ENCODE measurements at regions of chrX and their contacts with region 1.

Region 1: GRCh38 chrX:9829308-9830267 is 43.4 kb downstream of the SHROOM2 start:
- DNase-seq: peak; percentile 92
- H3K4me3 ChIP-seq: no peak overlapping the region
- H3K27ac ChIP-seq: peak overlapping the region; percentile 79
- H3K4me1 ChIP-seq: peaks cover 8% of the 10 kb centered on the region
- H3K27me3 ChIP-seq: no peaks in the 10 kb centered on the region
- CTCF ChIP-seq: peak in 1 of 2 donors; percentile 13

Region 2: DNA sequence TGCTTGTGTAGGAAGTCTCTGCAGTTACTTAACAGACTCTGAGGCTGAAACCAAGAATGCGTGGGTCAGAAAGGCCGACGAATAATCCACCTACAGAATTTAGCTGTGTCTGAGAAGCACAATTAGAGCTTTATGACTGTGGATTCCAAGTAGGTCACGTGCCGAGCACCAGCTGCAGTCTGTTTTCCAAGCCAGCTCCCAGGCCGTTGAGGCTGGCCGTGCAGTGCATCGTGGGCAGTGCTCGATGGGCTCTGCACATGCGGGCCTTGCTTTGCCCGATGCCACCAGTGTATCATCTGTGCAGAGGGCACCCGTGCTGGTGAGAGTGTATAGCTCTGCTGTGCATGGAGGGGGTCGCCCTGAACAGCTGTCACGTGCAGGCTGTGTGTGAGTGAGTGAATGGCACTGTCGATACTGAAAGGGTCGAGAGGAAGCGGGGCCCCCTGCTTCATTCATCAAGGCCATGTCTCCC is 70.1 kb after region 1 on chrX:
- CTCF ChIA-PET with region 1: no interaction called
- dilution Hi-C with region 1: loop called (anchors 5 kb)
- in situ Hi-C with region 1: no loop called
- intact Hi-C with region 1: no loop called
- DNase-seq: no peak
- H3K4me3 ChIP-seq: no peak overlapping the region
- H3K27ac ChIP-seq: no peak overlapping the region
- H3K4me1 ChIP-seq: peaks cover 21% of the 10 kb centered on the region
- H3K27me3 ChIP-seq: no peaks in the 10 kb centered on the region
- CTCF ChIP-seq: no peak